Endothelial cell of umbilical vein (primary cell): ENCODE measurements at regions of chr3 and their contacts with region 1.

Region 1: GRCh38 chr3:137013955-137014688 is 56.3 kb downstream of the IL20RB start:
- DNase-seq: peak; percentile 92
- H3K4me3 ChIP-seq: peak overlapping the region; percentile 39 to 87 (median 58)
- H3K27ac ChIP-seq: peak overlapping the region; percentile 50
- H3K4me1 ChIP-seq: peaks cover 8% of the 10 kb centered on the region
- H3K27me3 ChIP-seq: no peaks in the 10 kb centered on the region
- CTCF ChIP-seq: peak; percentile 71 to 74
- POLR2A ChIP-seq: no peak

Region 2: DNA sequence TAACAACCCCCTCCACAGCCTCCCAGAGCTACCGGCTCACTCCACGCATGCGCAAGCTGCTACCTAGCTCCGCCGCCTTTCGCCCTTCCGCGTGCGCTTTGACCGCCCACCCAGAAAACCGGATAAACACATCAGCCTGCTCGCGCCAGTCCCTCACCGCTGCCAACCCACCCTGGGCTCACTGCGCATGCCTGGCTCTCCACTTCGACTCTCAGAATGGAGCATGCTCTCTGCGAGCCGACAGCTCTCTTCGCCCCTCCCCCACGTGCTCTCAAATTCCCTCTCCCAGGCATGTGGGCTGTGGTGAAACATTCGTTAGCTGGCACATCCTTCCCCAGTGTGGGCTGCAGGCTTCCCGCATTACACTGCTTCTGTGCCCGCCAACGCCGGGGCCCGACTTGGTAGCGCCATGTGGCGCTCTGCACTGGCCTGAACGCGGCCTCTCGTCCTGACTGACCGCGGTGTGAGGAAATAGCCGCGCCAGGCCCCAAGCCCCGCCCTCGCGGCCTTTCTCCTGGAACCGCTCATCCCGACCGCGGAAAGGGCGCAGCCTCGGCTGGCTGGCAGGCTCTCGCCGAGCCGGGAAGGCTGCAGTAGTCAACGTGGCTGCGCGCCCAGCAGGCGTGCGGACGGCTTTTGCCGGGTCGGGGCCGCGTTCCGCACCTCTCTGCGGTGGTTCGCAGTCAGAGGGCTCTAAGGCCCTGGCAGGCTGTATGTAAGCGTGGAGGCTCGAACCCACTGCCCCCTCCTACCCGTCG is 817.5 kb before region 1 on chr3:
- CTCF ChIA-PET with region 1: interaction called, 3 read pairs
- POLR2A ChIA-PET with region 1: no interaction called
- dilution Hi-C with region 1: no loop called
- intact Hi-C with region 1: loop called (anchors 10 kb)
- DNase-seq: peak; percentile 100
- H3K4me3 ChIP-seq: peak overlapping the region; percentile 36 to 76 (median 48)
- H3K27ac ChIP-seq: peak overlapping the region; percentile 93
- H3K4me1 ChIP-seq: peaks cover 14% of the 10 kb centered on the region
- H3K27me3 ChIP-seq: no peaks in the 10 kb centered on the region
- CTCF ChIP-seq: no peak
- POLR2A ChIP-seq: peak; percentile 79

Region 3: DNA sequence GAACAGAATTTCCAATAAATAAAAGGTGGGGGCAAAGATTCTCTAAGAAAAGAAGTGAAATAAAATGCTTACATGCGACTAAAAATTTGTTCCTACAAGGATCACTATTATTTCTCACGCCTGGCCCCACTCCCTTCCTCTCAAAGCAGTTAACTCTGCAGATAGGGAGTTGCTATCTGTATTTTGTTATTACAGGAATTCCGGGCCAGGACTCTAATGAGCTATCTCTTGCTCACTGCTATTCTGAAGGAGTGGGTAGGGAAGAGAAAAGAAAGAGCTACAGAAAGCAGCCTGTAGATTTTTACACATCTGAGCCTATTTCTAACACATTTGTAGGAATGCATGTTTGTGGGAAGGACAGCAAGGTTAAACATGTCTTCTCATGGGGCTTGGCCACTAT is 623.5 kb before region 1 on chr3:
- CTCF ChIA-PET with region 1: interaction called, 41 read pairs
- POLR2A ChIA-PET with region 1: no interaction called
- dilution Hi-C with region 1: no loop called
- intact Hi-C with region 1: loop called (anchors 1 kb)
- DNase-seq: peak; percentile 78
- H3K4me3 ChIP-seq: no peak overlapping the region
- H3K27ac ChIP-seq: no peak overlapping the region
- H3K4me1 ChIP-seq: peaks cover 11% of the 10 kb centered on the region
- H3K27me3 ChIP-seq: no peaks in the 10 kb centered on the region
- CTCF ChIP-seq: no peak
- POLR2A ChIP-seq: no peak

Region 4: GRCh38 chr3:136838641-136839555 is 175.2 kb before region 1 on chr3:
- CTCF ChIA-PET with region 1: interaction called, 28 read pairs
- POLR2A ChIA-PET with region 1: no interaction called
- dilution Hi-C with region 1: no loop called
- intact Hi-C with region 1: no loop called
- DNase-seq: peak; percentile 88
- H3K4me3 ChIP-seq: peak overlapping the region in 1 of 3 experiments; percentile 33
- H3K27ac ChIP-seq: peak overlapping the region; percentile 86
- H3K4me1 ChIP-seq: peaks cover 54% of the 10 kb centered on the region
- H3K27me3 ChIP-seq: no peaks in the 10 kb centered on the region
- CTCF ChIP-seq: no peak
- POLR2A ChIP-seq: peak; percentile 25

Region 5: GRCh38 chr3:136893848-136894443 is 120.2 kb before region 1 on chr3:
- CTCF ChIA-PET with region 1: interaction called, 6 read pairs
- POLR2A ChIA-PET with region 1: no interaction called
- dilution Hi-C with region 1: no loop called
- intact Hi-C with region 1: loop called (anchors 5 kb)
- DNase-seq: peak; percentile 94
- H3K4me3 ChIP-seq: peak overlapping the region in 1 of 3 experiments; percentile 3
- H3K27ac ChIP-seq: peak overlapping the region; percentile 92
- H3K4me1 ChIP-seq: peaks cover 40% of the 10 kb centered on the region
- H3K27me3 ChIP-seq: no peaks in the 10 kb centered on the region
- CTCF ChIP-seq: no peak
- POLR2A ChIP-seq: no peak

Region 6: GRCh38 chr3:137032465-137033120 is 18.5 kb after region 1 on chr3:
- CTCF ChIA-PET with region 1: interaction called, 21 read pairs
- POLR2A ChIA-PET with region 1: no interaction called
- dilution Hi-C with region 1: no loop called
- intact Hi-C with region 1: no loop called
- DNase-seq: peak; percentile 86
- H3K4me3 ChIP-seq: peak overlapping the region; percentile 23 to 61 (median 26)
- H3K27ac ChIP-seq: no peak overlapping the region
- H3K4me1 ChIP-seq: peaks cover 10% of the 10 kb centered on the region
- H3K27me3 ChIP-seq: peaks cover 10 to 12% of the 10 kb centered on the region in 2 experiments
- CTCF ChIP-seq: peak; percentile 93 to 94
- POLR2A ChIP-seq: no peak

Region 7: GRCh38 chr3:137171829-137172603 is 157.9 kb after region 1 on chr3:
- CTCF ChIA-PET with region 1: no interaction called
- POLR2A ChIA-PET with region 1: no interaction called
- dilution Hi-C with region 1: no loop called
- intact Hi-C with region 1: no loop called
- DNase-seq: no peak
- H3K4me3 ChIP-seq: no peak overlapping the region
- H3K27ac ChIP-seq: no peak overlapping the region
- H3K4me1 ChIP-seq: no peaks in the 10 kb centered on the region
- H3K27me3 ChIP-seq: no peaks in the 10 kb centered on the region
- CTCF ChIP-seq: no peak
- POLR2A ChIP-seq: no peak